Caco-2 (cell line): ENCODE measurements at regions of chr5 and their contacts with region 1.

Region 1: GRCh38 chr5:90529194-90529938 is at the start of gene LYSMD3:
- DNase-seq: peak; percentile 97 to 98
- H3K4me3 ChIP-seq: peak within 1 kb of the TSS; percentile 51
- H3K4me3 Mint-ChIP-seq: peak within 1 kb of the TSS; percentile 96
- H3K27ac Mint-ChIP-seq: peak within 1 kb of the TSS; percentile 79
- H3K4me1 ChIP-seq: peaks cover 4% of the 10 kb centered on the region; the same call in 1 of the 2 replicates
- H3K4me1 Mint-ChIP-seq: peaks cover 26% of the 10 kb centered on the region
- H3K27me3 ChIP-seq: no peaks in the 10 kb centered on the region
- H3K27me3 Mint-ChIP-seq: no peaks in the 10 kb centered on the region
- CTCF ChIP-seq: no peak
- total RNA-seq, gene LYSMD3: 13.9 and 15.3 TPM in 2 replicates

Region 2: DNA sequence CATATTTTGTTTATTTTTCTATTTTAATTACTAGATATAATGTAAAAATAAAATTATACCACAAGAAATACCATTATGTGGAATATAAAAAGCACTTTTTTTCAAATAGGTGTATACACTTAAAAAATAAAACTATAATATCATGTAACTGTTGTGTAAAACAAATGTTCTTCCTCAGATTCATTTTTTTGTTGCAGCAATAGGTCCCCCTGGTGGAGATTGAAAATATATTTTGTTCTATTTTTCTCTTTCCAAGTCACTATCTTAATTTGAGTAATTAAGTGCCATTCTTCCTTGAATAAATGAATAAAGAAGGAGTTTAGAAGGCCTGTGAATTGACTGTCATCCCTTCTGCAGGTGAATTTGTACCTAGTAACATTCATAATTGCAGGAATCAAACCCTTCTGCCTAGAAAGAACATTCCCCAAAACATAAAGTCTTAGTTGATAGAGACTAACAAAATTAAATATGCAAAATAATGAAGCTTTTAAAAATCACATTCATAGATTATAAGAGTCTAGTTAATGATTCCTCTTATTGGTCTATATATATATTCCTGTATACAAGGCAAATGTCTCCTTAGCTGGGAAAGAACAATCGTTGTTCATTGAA is 143.2 kb before region 1 on chr5:
- CTCF ChIA-PET with region 1: no interaction called
- POLR2A ChIA-PET with region 1: no interaction called
- intact Hi-C with region 1: loop called (anchors 1 kb)
- DNase-seq: peak in 1 of 2 experiments; percentile 15
- H3K4me3 ChIP-seq: no peak overlapping the region
- H3K4me3 Mint-ChIP-seq: no peak overlapping the region
- H3K27ac Mint-ChIP-seq: no peak overlapping the region
- H3K4me1 ChIP-seq: no peaks in the 10 kb centered on the region
- H3K4me1 Mint-ChIP-seq: peaks cover 6% of the 10 kb centered on the region
- H3K27me3 ChIP-seq: no peaks in the 10 kb centered on the region
- H3K27me3 Mint-ChIP-seq: no peaks in the 10 kb centered on the region
- CTCF ChIP-seq: peak; percentile 51 to 61

Region 3: GRCh38 chr5:90421136-90421535 is 108.2 kb before region 1 on chr5:
- CTCF ChIA-PET with region 1: interaction called, 3 read pairs
- POLR2A ChIA-PET with region 1: no interaction called
- intact Hi-C with region 1: loop called (anchors 1 kb)
- DNase-seq: peak; percentile 50 to 55
- H3K4me3 ChIP-seq: no peak overlapping the region
- H3K4me3 Mint-ChIP-seq: no peak overlapping the region
- H3K27ac Mint-ChIP-seq: no peak overlapping the region
- H3K4me1 ChIP-seq: peaks cover 4% of the 10 kb centered on the region; the same call in 1 of the 2 replicates
- H3K4me1 Mint-ChIP-seq: no peaks in the 10 kb centered on the region
- H3K27me3 ChIP-seq: no peaks in the 10 kb centered on the region
- H3K27me3 Mint-ChIP-seq: peaks cover 9% of the 10 kb centered on the region
- CTCF ChIP-seq: peak; percentile 30 to 68

Region 4: GRCh38 chr5:90474235-90475109 is 54.9 kb before region 1 on chr5 and contains the starts of genes MBLAC2 and POLR3G:
- CTCF ChIA-PET with region 1: interaction called, 6 read pairs
- POLR2A ChIA-PET with region 1: interaction called, 4 read pairs
- intact Hi-C with region 1: loop called (anchors 1 kb)
- DNase-seq: peak; percentile 95 to 96
- H3K4me3 ChIP-seq: peak within 1 kb of the TSS; percentile 94
- H3K4me3 Mint-ChIP-seq: peak within 1 kb of the TSS; percentile 94
- H3K27ac Mint-ChIP-seq: peak within 1 kb of the TSS; percentile 93
- H3K4me1 ChIP-seq: peaks cover 7% of the 10 kb centered on the region; the same call in 1 of the 2 replicates
- H3K4me1 Mint-ChIP-seq: peaks cover 12% of the 10 kb centered on the region
- H3K27me3 ChIP-seq: no peaks in the 10 kb centered on the region
- H3K27me3 Mint-ChIP-seq: no peaks in the 10 kb centered on the region
- CTCF ChIP-seq: peak; percentile 44 to 69
- total RNA-seq, gene MBLAC2: 3.8 and 4.9 TPM in 2 replicates
- total RNA-seq, gene POLR3G: 4.5 and 5.4 TPM in 2 replicates

Region 5: DNA sequence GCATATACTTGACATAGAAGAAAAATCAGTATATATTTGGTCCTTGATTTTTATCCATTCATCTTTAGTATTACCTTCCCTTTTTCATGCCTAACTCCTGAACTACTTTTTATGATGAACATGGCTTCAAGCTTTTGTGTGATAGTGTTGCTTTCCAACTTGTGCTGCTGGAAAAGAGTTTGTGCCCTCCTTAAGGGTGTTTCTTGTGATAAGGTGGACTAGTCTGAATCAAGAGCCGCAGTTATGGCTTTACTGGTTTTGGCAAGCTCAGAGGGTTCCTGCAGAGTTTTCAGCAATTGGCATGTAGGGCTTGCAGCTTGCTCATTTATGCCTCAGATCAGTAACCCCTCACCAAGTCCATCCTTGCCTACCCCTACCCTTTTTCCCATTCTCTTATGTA is 34.2 kb before region 1 on chr5:
- CTCF ChIA-PET with region 1: no interaction called
- POLR2A ChIA-PET with region 1: no interaction called
- intact Hi-C with region 1: no loop called
- DNase-seq: no peak
- H3K4me3 ChIP-seq: no peak overlapping the region
- H3K4me3 Mint-ChIP-seq: no peak overlapping the region
- H3K27ac Mint-ChIP-seq: no peak overlapping the region
- H3K4me1 ChIP-seq: no peaks in the 10 kb centered on the region
- H3K4me1 Mint-ChIP-seq: no peaks in the 10 kb centered on the region
- H3K27me3 ChIP-seq: no peaks in the 10 kb centered on the region
- H3K27me3 Mint-ChIP-seq: no peaks in the 10 kb centered on the region
- CTCF ChIP-seq: no peak

Region 6: GRCh38 chr5:90558344-90559192 is 29.2 kb after region 1 on chr5 and contains the start of gene ADGRV1:
- CTCF ChIA-PET with region 1: no interaction called
- POLR2A ChIA-PET with region 1: no interaction called
- intact Hi-C with region 1: no loop called
- DNase-seq: peak; percentile 96 to 97
- H3K4me3 ChIP-seq: peak within 1 kb of the TSS; percentile 65
- H3K4me3 Mint-ChIP-seq: peak within 1 kb of the TSS; percentile 93
- H3K27ac Mint-ChIP-seq: peak within 1 kb of the TSS; percentile 70
- H3K4me1 ChIP-seq: peaks cover 20% of the 10 kb centered on the region
- H3K4me1 Mint-ChIP-seq: peaks cover 30% of the 10 kb centered on the region
- H3K27me3 ChIP-seq: no peaks in the 10 kb centered on the region
- H3K27me3 Mint-ChIP-seq: no peaks in the 10 kb centered on the region
- CTCF ChIP-seq: no peak
- total RNA-seq, gene ADGRV1: 23.2 and 31.1 TPM in 2 replicates

Region 7: DNA sequence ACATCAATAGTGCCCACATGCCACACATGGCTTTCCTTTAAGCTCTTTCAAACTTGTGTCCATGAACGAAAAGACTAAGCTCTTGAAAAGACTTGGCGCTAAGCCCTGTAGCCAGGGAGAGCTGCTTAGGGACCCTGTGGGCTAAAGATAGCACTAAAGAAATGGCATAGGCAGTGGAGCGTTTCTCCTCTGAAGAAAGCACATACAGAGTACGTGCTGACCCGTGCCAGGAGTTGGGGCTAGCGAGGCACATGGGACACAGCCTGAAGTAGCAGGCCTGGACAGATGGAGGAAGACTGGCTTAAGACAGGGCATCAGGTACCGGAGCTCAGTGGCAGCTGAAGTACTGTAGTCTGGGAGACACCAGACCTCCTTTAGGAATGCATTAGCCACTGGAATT is 68.9 kb after region 1 on chr5:
- CTCF ChIA-PET with region 1: no interaction called
- POLR2A ChIA-PET with region 1: no interaction called
- intact Hi-C with region 1: no loop called
- DNase-seq: no peak
- H3K4me3 ChIP-seq: no peak overlapping the region
- H3K4me3 Mint-ChIP-seq: no peak overlapping the region
- H3K27ac Mint-ChIP-seq: no peak overlapping the region
- H3K4me1 ChIP-seq: no peaks in the 10 kb centered on the region
- H3K4me1 Mint-ChIP-seq: no peaks in the 10 kb centered on the region
- H3K27me3 ChIP-seq: no peaks in the 10 kb centered on the region
- H3K27me3 Mint-ChIP-seq: peaks cover 3% of the 10 kb centered on the region
- CTCF ChIP-seq: no peak

Region 8: GRCh38 chr5:90655423-90655822 is 126.1 kb after region 1 on chr5:
- CTCF ChIA-PET with region 1: no interaction called
- POLR2A ChIA-PET with region 1: no interaction called
- intact Hi-C with region 1: no loop called
- DNase-seq: no peak
- H3K4me3 ChIP-seq: no peak overlapping the region
- H3K4me3 Mint-ChIP-seq: no peak overlapping the region
- H3K27ac Mint-ChIP-seq: no peak overlapping the region
- H3K4me1 ChIP-seq: no peaks in the 10 kb centered on the region
- H3K4me1 Mint-ChIP-seq: no peaks in the 10 kb centered on the region
- H3K27me3 ChIP-seq: no peaks in the 10 kb centered on the region
- H3K27me3 Mint-ChIP-seq: no peaks in the 10 kb centered on the region
- CTCF ChIP-seq: no peak

Region 9: DNA sequence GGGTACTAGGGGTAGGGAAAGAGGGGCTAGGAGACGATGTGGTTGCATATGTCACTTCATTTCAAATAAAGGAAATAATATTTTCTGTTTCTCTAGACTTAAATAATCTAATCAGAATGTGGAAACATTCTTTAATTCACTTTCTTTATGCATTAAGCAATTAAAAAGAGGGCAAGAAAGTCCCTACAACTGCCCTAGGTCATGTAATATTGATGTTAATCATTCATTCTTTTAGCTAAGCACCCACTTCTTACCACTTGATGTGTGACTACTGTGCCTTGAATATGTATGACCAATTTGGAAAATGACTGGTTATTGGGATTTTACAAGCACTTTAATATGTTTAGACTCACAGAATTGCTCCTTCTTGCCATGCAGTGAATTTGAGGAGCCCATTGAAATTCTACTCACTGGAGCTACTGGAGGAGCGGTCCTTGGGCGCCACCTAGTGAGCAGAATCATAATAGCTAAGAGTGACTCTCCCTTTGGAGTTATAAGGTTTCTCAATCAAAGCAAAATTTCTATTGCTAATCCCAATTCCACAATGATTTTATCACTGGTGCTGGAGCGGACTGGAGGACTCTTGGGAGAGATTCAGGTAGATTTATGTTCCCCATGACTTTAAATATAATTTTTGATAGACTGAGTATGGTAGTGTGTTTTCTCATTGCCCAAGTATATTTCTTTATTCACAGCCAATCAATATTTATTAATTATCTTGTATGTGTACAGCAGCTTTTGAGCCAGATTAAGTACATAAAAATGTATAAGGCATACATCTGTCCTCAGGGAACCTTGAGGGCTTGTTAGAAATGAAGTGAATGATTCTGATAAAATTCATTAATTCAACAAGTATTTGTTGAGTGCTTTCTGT is 254.3 kb after region 1 on chr5:
- CTCF ChIA-PET with region 1: no interaction called
- POLR2A ChIA-PET with region 1: no interaction called
- intact Hi-C with region 1: loop called (anchors 1 kb)
- DNase-seq: peak; percentile 64 to 83
- H3K4me3 ChIP-seq: no peak overlapping the region
- H3K4me3 Mint-ChIP-seq: no peak overlapping the region
- H3K27ac Mint-ChIP-seq: no peak overlapping the region
- H3K4me1 ChIP-seq: no peaks in the 10 kb centered on the region
- H3K4me1 Mint-ChIP-seq: no peaks in the 10 kb centered on the region
- H3K27me3 ChIP-seq: no peaks in the 10 kb centered on the region
- H3K27me3 Mint-ChIP-seq: no peaks in the 10 kb centered on the region
- CTCF ChIP-seq: peak; percentile 84 to 91